Activated T-helper 2 cell treated with anti-CD3 and anti-CD28 coated beads, Interferon-gamma antibody, Interleukin-2, Interleukin-4, amounts not matched to agents 10 μg/mL and 5 μg/mL and 100 μg/mL, durations not matched to agents 14 hours and 24 hours and 36 hours (primary cell): ENCODE measurements at regions of chr14 and their contacts with region 1.

Region 1: DNA sequence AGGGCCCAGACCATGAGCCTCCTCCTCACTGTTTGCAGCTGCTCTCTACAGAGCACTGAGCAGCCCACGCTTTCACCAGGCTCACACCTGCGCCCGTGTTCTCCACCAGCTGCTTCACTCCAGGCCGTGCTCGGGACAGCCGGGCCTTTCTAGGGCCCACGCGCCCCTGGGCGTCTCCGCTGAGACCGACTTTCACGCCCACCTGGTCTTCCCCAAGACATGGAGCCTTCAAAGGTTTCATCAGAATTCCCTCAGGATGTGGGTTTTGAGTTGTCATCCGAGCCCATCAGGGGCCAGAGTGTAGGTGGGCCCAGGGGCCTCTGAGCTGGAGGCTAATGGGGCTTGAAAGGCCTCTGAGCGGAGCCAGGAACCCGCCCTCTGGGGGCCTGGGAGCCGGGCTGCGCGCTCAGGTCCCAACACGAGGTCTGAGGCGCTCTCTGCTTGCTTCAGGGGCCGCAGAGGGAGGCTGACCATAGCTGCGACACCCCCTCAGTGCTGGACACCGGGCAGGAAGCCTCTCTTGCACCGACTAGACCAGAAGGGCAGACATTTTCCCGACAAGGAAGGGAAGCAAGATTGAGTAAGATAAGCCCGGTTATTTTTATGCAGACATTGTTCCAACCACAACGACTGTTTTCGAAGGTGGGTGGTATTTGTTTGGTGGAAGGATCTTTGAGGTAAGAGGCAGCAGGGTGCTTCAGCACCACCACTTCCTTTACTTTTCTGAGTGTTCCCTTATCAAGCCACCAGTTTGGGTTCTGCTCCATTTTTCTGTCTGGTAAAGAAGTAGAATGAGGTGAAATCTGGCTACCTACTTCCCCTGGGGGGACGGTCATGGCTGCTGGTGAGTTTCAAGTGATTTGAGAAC is 125.0 kb upstream of the FUT8 start:
- DNase-seq: peak; percentile 52
- H3K4me3 Mint-ChIP-seq: peak overlapping the region; percentile 62
- H3K27ac Mint-ChIP-seq: peak overlapping the region; percentile 96
- H3K4me1 Mint-ChIP-seq: peaks cover 66% of the 10 kb centered on the region
- H3K27me3 Mint-ChIP-seq: no peaks in the 10 kb centered on the region

Region 2: DNA sequence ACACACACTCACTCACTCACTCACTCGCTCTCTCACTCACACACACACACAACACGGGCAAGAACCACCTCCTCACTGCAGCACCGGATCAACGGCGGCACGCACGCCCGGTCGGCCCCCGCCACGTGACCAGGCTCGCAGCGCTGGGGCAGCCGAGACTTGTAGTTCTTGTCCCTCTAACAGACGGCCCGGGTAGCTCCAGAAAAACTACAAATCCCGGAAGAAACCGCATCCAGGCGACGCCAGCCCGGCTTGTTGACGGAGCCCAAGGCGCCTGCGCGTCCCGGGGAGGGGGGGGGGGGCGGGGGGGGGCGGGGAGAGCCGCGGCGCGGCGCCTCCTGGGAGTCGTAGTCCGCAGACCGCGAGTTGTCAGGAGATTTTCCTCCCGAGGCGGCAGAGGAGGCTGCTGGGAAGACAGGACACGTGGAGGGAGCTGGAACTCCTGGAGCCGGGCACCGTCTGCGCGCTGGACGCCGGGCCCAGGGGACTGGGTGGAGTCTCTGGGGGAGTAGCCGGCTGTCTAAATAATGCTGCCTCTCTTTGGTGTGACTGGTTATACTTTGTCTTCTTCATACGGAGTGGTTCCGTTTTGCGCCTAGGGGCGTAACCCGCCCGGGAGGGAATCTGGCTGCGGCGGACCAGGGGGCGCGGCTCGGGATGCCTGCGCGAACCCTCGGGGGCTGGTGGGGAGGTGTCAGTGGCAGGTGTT is 184.9 kb before region 1 on chr14 and contains the start of gene MAX:
- intact Hi-C with region 1: loop called (anchors 5 kb)
- DNase-seq: peak; percentile 99
- H3K4me3 Mint-ChIP-seq: peak within 1 kb of the TSS; percentile 92
- H3K27ac Mint-ChIP-seq: peak within 1 kb of the TSS; percentile 94
- H3K4me1 Mint-ChIP-seq: peaks cover 40% of the 10 kb centered on the region
- H3K27me3 Mint-ChIP-seq: peaks cover 6% of the 10 kb centered on the region
- total RNA-seq, gene MAX: 113 and 115 TPM in 2 replicates

Region 3: GRCh38 chr14:65229751-65230749 is 57.4 kb before region 1 on chr14:
- intact Hi-C with region 1: loop called (anchors 2 kb)
- DNase-seq: no peak
- H3K4me3 Mint-ChIP-seq: peak overlapping the region; percentile 81
- H3K27ac Mint-ChIP-seq: peak overlapping the region; percentile 90
- H3K4me1 Mint-ChIP-seq: peaks cover 42% of the 10 kb centered on the region
- H3K27me3 Mint-ChIP-seq: no peaks in the 10 kb centered on the region

Region 4: GRCh38 chr14:65255536-65256461 is 31.7 kb before region 1 on chr14:
- intact Hi-C with region 1: no loop called
- DNase-seq: no peak
- H3K4me3 Mint-ChIP-seq: no peak overlapping the region
- H3K27ac Mint-ChIP-seq: no peak overlapping the region
- H3K4me1 Mint-ChIP-seq: peaks cover 16% of the 10 kb centered on the region
- H3K27me3 Mint-ChIP-seq: peaks cover 2% of the 10 kb centered on the region

Region 5: DNA sequence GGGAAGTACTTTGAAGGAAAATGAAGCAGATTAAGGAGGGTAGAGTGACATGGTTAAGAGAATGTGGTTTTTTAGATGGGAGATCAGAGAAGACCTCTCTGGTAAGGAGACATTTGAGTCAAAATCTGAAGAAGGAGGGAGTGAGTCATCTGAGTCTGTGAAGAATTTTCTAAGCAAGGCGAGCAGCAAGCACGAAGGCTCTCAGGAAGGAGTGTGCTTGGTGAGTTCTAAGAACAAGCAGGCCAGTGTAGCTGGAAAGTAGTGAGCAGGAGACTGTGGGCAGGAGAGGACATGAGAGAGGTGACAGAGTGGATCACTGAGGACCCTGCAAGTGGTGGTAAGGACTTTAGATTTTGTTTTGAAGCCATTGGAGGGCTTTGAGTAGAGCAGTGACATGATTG is 48.7 kb after region 1 on chr14:
- intact Hi-C with region 1: loop called (anchors 1 kb)
- DNase-seq: peak; percentile 56
- H3K4me3 Mint-ChIP-seq: peak overlapping the region; percentile 87
- H3K27ac Mint-ChIP-seq: peak overlapping the region; percentile 94
- H3K4me1 Mint-ChIP-seq: peaks cover 56% of the 10 kb centered on the region
- H3K27me3 Mint-ChIP-seq: no peaks in the 10 kb centered on the region

Region 6: DNA sequence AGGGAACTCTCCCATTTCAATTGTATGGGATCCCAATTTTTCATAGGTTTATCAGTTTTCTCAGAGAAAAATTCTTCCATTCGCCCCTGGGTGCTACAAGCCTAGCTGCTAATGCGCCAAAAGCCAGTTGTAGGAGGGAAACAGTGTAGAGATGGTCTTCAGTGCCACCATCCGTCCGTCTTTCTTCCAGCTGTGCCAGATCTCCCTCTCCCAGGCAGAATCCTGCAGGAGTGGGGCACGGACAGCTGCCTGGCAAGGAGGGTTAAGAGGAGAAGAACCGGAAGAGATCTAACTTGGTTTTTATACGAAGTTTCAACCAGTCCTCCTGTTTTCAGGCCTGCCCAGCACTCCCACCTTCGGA is 86.2 kb after region 1 on chr14:
- intact Hi-C with region 1: loop called (anchors 1 kb)
- DNase-seq: no peak
- H3K4me3 Mint-ChIP-seq: no peak overlapping the region
- H3K27ac Mint-ChIP-seq: peak overlapping the region; percentile 50
- H3K4me1 Mint-ChIP-seq: peaks cover 42% of the 10 kb centered on the region
- H3K27me3 Mint-ChIP-seq: no peaks in the 10 kb centered on the region

Region 7: DNA sequence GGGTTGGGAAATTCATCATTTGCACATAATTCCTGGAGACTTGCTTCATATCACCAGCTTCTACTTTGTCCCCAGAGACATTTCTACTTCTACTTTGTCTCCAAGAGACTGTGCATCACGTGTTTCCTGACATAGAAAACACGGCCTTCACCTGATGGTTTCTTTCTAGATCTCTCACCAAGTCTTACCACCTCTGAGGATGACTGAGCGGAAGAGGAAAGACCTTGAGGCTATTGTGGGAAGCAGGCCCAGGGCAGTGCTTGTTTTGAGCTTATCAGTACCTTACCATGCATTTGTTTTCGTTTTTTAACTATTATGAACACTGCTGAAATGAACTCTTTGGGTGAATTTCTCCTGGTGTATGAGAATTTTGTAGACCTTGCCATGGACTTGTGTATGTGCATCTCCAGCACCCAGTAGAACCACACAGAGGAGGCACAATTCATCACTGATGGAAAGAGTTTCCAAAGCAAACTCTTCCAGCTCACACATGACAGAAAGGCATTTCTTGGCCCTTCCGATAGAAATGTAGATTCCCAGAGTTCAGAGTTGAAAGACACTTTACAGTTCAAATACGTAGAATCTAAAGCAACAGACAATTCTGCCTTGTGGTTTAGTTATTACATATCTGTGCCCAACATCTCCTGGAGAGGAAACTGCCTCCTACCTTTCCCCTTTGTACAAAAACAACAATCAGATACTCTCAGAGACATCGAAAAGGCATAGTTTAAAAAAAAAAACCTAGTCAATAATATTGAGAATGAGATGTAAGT is 559.8 kb after region 1 on chr14:
- intact Hi-C with region 1: loop called (anchors 2 kb)
- DNase-seq: peak; percentile 79
- H3K4me3 Mint-ChIP-seq: peak overlapping the region; percentile 22
- H3K27ac Mint-ChIP-seq: peak overlapping the region; percentile 80
- H3K4me1 Mint-ChIP-seq: peaks cover 66% of the 10 kb centered on the region
- H3K27me3 Mint-ChIP-seq: no peaks in the 10 kb centered on the region